ENCODE measurements at regions of chr1 and their contacts with region 1.

Region 1: GRCh38 chr1:58546520-58547308 is at the start of gene OMA1:
- DNase-seq: peak; percentile 76
- H3K4me3 ChIP-seq: peak within 1 kb of the TSS; percentile 78
- H3K27me3 ChIP-seq: peaks cover 3% of the 10 kb centered on the region; the same call in 1 of the 2 replicates
- CTCF ChIP-seq: peak; percentile 99
- polyA plus RNA-seq, gene OMA1: 8.4 and 15.4 TPM in 2 replicates

Region 2: GRCh38 chr1:58561633-58562032 is 14.9 kb after region 1 on chr1:
- CTCF ChIA-PET with region 1: interaction called, 11 read pairs
- POLR2A ChIA-PET with region 1: interaction called, 4 read pairs
- DNase-seq: no peak
- H3K4me3 ChIP-seq: no peak overlapping the region
- H3K27me3 ChIP-seq: peaks cover 5% of the 10 kb centered on the region
- CTCF ChIP-seq: no peak

Region 3: GRCh38 chr1:58652651-58653184 is 106.0 kb after region 1 on chr1:
- CTCF ChIA-PET with region 1: interaction called, 33 read pairs
- POLR2A ChIA-PET with region 1: no interaction called
- DNase-seq: peak; percentile 29
- H3K4me3 ChIP-seq: no peak overlapping the region
- H3K27me3 ChIP-seq: no peaks in the 10 kb centered on the region
- CTCF ChIP-seq: peak; percentile 73

Region 4: GRCh38 chr1:59759156-59759925 is 1212.6 kb after region 1 on chr1:
- CTCF ChIA-PET with region 1: no interaction called
- POLR2A ChIA-PET with region 1: interaction called, 11 read pairs
- DNase-seq: no peak
- H3K4me3 ChIP-seq: no peak overlapping the region
- H3K27me3 ChIP-seq: no peaks in the 10 kb centered on the region
- CTCF ChIP-seq: peak; percentile 94